WTC11 (cell line): ENCODE measurements at regions of chr20 and their contacts with region 1.

Region 1: DNA sequence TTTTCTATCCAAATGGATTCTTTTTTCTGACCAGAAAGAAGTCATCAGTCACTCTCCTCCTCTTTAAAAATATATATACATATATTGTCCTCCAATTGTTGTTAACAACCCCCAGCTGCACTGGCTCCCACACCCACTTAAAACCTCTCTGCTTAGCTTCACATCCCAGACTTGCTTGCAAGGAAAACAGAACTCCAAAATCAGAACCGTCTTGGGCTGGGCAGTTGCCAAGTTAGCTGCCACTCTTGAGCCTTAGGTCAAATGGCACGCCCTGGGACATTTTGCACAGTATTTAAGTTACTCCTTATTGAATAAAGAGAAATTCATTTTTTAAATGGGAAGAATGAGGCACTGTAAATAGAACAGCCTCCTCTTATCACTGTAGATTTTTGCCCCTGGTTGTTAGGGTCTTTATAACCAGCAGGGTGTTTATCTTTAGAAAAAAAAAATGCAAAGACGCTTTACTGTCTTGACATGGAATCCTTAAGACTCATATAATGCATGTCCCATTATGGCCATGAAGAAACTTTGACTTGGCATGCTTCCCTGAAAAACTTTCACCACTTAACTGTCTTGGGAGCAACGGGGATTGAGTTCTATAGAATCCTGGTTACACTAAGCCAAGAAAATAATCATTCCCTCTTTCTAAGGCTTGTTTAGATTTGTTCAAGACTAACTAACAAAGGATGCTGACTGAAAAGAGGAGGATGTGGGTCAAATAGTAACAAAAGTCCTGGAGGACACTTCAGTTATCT is 204.5 kb downstream of the ISM1 start:
- DNase-seq: no peak
- ATAC-seq: no peak
- H3K4me3 Mint-ChIP-seq: no peak overlapping the region
- H3K27ac Mint-ChIP-seq: no peak overlapping the region; the same call in 1 of the 2 replicates
- H3K4me1 Mint-ChIP-seq: peaks cover 33% of the 10 kb centered on the region
- H3K27me3 Mint-ChIP-seq: no peaks in the 10 kb centered on the region
- CTCF ChIP-seq: no peak

Region 2: GRCh38 chr20:13397300-13397724 is 28.2 kb before region 1 on chr20:
- CTCF ChIA-PET with region 1: no interaction called
- POLR2A ChIA-PET with region 1: no interaction called
- DNase-seq: no peak
- ATAC-seq: no peak
- H3K4me3 Mint-ChIP-seq: no peak overlapping the region
- H3K27ac Mint-ChIP-seq: peak overlapping the region; percentile 4; the same call in 1 of the 2 replicates
- H3K4me1 Mint-ChIP-seq: peaks cover 24% of the 10 kb centered on the region
- H3K27me3 Mint-ChIP-seq: no peaks in the 10 kb centered on the region
- CTCF ChIP-seq: no peak

Region 3: DNA sequence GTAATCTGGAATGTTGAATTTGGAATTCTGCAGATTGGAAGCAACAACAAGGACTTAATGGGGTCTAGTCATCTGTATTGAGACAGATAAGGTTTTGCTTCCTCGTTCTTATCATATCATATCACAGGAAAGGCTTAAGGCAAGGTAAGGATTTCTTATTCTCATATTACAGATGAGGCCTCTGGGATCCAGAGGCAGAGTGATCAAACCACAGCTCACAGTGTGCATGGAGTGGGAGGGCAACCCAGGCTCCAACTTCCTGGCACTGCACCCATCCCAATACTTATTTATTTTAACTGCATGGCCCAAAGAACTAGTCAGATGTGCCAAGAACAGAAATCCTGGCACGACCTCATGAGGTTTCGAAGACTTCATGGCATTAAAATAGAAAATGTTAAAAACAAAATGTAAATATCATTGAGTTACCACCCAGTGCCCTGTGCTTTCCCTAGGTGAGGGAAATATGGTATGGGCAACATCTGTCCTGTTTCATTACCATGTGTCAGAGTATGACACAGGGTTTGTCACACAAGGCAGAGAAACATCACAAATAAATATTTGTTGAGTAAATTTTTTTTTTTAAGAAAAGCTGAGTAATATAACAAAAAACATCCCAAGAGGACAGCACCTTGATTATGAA is 12.6 kb before region 1 on chr20:
- CTCF ChIA-PET with region 1: interaction called, 10 read pairs
- POLR2A ChIA-PET with region 1: no interaction called
- DNase-seq: no peak
- ATAC-seq: no peak
- H3K4me3 Mint-ChIP-seq: no peak overlapping the region
- H3K27ac Mint-ChIP-seq: no peak overlapping the region; the same call in 1 of the 2 replicates
- H3K4me1 Mint-ChIP-seq: peaks cover 40% of the 10 kb centered on the region
- H3K27me3 Mint-ChIP-seq: no peaks in the 10 kb centered on the region
- CTCF ChIP-seq: no peak